ENCODE measurements at regions of chr5 and their contacts with region 1.

Region 1: GRCh38 chr5:72878854-72879253 is 62.4 kb downstream of the TNPO1 start:
- DNase-seq: no peak
- H3K4me3 ChIP-seq: no peak overlapping the region
- H3K27ac ChIP-seq: no peak overlapping the region
- H3K4me1 ChIP-seq: no peaks in the 10 kb centered on the region
- H3K27me3 ChIP-seq: no peaks in the 10 kb centered on the region
- CTCF ChIP-seq: no peak

Region 2: DNA sequence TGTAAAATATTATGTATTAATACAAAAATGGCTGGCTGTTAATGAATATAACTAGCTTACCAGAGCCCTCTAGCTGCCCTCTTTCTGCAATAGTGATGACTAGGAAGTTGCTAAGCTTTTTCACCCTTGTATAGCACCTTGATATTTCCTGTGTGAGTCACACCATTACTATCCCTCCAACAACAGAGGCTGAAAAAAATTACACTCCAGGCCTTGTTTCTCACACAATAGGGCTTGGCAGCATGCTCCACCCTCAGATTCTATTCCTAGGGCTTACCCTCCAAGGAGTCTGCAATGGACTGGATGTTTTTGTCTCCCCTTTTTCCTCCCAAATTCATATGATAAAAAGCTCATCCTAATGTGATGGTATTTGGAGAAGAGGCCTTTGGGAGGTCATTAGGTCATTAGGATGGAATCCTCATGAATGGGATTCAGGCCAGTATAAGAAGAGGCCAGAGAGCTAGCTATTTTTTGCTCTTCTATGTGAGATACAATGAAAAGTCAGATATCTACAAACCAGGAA is 956.2 kb before region 1 on chr5:
- CTCF ChIA-PET with region 1: no interaction called
- POLR2A ChIA-PET with region 1: interaction called, 11 read pairs
- intact Hi-C with region 1: no loop called
- DNase-seq: peak; percentile 66 to 92
- H3K4me3 ChIP-seq: no peak overlapping the region
- H3K27ac ChIP-seq: peak overlapping the region; percentile 94
- H3K4me1 ChIP-seq: peaks cover 36% of the 10 kb centered on the region
- H3K27me3 ChIP-seq: no peaks in the 10 kb centered on the region
- CTCF ChIP-seq: no peak

Region 3: GRCh38 chr5:72723581-72723980 is 155.3 kb before region 1 on chr5:
- CTCF ChIA-PET with region 1: no interaction called
- POLR2A ChIA-PET with region 1: no interaction called
- intact Hi-C with region 1: no loop called
- DNase-seq: peak; percentile 29 to 88
- H3K4me3 ChIP-seq: no peak overlapping the region
- H3K27ac ChIP-seq: peak overlapping the region; percentile 74
- H3K4me1 ChIP-seq: peaks cover 33% of the 10 kb centered on the region
- H3K27me3 ChIP-seq: no peaks in the 10 kb centered on the region
- CTCF ChIP-seq: no peak

Measured in PC-9 (cell line).